Activated T-helper 2 cell treated with anti-CD3 and anti-CD28 coated beads, Interferon-gamma antibody, Interleukin-2, Interleukin-4, amounts not matched to agents 10 μg/mL and 5 μg/mL and 100 μg/mL, durations not matched to agents 14 hours and 24 hours and 36 hours (primary cell): ENCODE measurements at regions of chr5 and their contacts with region 1.

Region 1: DNA sequence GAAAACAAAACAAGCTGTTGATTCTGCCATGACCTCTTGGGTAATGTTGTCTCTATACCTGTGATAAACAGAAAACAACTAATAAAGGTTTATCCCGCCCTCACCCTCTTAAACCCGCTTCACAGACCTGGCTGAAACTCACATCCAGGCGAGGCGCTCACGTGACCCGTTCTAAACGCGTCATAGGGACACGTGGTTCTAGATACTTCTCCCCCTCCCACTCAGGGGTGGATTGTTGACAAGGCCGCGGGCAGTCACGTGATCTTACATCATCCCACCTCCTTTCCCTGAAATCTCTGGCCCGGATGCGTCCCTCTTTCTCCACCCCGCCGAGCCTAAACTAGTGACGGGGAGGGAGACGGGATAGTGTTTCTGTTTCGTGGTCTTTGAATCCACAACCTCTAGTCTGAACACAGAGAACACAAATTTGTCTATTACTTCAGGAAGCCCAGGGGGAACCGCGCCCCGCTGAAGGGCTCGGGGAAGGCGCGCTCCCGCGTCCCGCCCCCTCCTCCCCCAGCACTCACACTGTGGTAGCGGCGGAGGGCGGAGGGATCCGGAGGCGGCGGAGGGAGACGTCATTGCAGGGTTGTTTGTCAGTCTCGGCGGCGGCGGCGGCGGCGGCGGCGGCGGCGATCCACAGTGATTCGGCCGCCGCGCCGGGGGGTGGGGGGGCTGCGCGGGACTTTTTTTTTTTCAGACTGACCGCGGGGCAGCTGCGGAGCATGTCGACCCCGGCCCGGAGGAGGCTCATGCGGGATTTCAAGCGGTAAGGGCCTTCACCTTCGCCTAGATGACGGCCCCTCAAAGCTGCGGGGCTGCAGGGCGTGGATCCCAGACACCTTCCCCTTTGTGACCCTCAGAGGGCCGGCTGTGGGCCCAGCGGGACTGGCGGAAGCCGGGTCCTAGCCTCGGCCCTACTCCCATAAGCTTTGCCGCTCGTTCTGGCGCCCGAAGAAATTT is at the start of gene UBE2B:
- DNase-seq: peak; percentile 94
- H3K4me3 Mint-ChIP-seq: peak within 1 kb of the TSS; percentile 95
- H3K27ac Mint-ChIP-seq: peak within 1 kb of the TSS; percentile 96
- H3K4me1 Mint-ChIP-seq: peaks cover 44% of the 10 kb centered on the region
- H3K27me3 Mint-ChIP-seq: no peaks in the 10 kb centered on the region
- total RNA-seq, gene UBE2B: 97.2 and 97.5 TPM in 2 replicates

Region 2: DNA sequence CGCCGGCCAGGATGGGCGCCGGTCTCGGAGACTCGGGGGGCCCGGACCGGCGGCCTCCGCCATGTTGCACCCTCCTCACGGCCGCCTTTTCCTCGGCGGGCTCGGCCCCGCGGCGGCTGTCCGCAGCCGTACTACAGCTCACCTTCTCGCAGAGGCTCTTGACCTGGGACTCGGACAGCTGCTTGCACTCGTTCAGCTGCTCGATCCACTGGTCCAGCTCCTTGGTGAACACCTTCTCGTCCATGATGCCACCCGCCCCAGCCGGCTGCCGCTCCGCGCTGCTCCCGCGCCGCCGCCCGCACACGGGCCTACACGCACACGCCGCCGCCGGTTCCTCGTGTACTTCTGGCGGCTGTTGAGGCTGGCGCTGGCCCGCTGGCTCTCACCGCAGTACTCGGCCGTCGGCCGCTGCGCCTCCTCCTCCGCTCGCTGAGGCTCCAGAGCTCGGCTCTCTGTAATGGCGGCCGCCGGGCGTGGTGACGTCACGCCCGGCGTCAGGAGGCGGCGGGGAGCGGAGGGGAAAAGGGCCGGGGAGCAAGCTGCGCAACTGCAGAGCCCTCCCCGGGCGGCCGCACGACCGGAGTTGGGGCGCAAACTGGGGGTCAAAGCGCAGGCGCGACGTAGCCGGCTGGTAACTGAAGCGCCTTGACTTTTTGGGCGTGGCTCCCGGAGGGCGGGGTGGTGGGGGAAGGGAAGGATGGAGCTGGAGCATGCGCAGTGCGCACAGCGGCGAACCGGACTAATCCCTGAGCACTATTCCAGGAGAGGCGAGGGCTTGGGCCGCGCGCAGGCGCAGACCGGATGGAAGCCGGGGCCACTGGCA is 145.3 kb before region 1 on chr5 and contains the start of gene PPP2CA:
- intact Hi-C with region 1: loop called (anchors 2 kb)
- DNase-seq: peak; percentile 100
- H3K4me3 Mint-ChIP-seq: peak within 1 kb of the TSS; percentile 89
- H3K27ac Mint-ChIP-seq: peak within 1 kb of the TSS; percentile 98
- H3K4me1 Mint-ChIP-seq: peaks cover 38% of the 10 kb centered on the region
- H3K27me3 Mint-ChIP-seq: no peaks in the 10 kb centered on the region
- total RNA-seq, gene PPP2CA: 171 and 179 TPM in 2 replicates

Region 3: DNA sequence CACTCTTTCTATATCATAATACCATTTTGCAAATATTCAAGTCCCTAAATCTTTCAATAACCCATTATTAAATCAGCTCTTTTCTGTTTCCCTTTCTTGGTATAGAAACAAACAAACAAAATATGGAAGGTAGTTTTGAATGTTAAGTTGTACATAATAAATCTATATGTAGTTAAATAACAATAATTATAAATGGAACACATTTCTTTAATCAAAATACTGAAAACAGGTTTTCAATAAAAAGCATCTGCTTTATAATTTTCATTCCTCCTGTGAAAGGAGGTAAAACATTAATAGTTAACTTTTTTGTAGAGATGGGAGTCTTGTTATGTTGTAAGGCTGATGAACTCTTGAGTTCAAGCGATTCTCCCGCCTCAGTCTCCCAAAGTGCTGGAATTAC is 58.4 kb before region 1 on chr5:
- intact Hi-C with region 1: no loop called
- DNase-seq: no peak
- H3K4me3 Mint-ChIP-seq: no peak overlapping the region
- H3K27ac Mint-ChIP-seq: no peak overlapping the region
- H3K4me1 Mint-ChIP-seq: peaks cover 3% of the 10 kb centered on the region
- H3K27me3 Mint-ChIP-seq: peaks cover 2% of the 10 kb centered on the region

Region 4: DNA sequence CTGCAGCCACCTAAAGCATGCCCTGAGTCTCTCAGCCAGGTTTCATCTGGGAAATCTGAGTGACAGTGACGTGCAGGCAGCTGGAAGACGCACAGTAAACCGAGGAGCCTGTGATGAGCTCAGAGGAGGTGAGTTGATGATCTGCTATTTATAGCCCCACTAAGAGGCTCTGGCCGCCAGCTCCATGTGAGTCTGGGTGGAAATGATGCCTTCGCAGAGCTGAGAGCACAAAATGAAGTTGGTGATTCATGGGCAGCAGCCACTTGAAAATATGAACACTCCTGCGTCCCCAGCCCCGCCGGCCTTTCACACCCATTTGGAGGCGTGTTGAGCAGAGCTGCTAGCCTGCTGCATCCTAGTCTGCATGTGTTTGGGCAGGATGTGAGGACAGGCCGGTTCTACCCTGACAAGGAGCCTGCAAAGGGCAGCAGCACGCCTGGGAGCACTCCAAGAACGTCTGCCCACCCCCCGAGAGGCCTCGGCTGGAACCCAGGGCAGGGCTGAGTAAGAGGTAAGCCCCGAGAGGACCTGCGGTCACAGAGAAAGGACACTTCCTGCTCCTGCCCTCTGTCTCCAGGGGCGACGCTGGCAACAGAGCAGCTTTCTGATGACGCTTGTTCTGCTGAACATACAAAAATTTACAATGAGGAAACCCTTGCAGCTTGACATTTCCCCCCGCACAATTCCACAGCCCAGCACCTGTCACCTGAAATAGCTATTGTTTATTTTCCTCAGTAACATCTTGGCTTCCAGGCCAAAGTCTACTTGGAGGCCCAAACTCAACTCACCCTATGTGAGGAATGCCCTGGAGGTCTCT is 65.6 kb after region 1 on chr5:
- intact Hi-C with region 1: loop called (anchors 2 kb)
- DNase-seq: peak; percentile 62
- H3K4me3 Mint-ChIP-seq: no peak overlapping the region
- H3K27ac Mint-ChIP-seq: peak overlapping the region; percentile 68
- H3K4me1 Mint-ChIP-seq: peaks cover 19% of the 10 kb centered on the region
- H3K27me3 Mint-ChIP-seq: no peaks in the 10 kb centered on the region

Region 5: GRCh38 chr5:134586866-134587524 is 215.8 kb after region 1 on chr5:
- intact Hi-C with region 1: loop called (anchors 5 kb)
- DNase-seq: peak; percentile 74
- H3K4me3 Mint-ChIP-seq: no peak overlapping the region
- H3K27ac Mint-ChIP-seq: peak overlapping the region; percentile 25
- H3K4me1 Mint-ChIP-seq: peaks cover 15% of the 10 kb centered on the region
- H3K27me3 Mint-ChIP-seq: no peaks in the 10 kb centered on the region

Region 6: GRCh38 chr5:134626369-134627014 is 255.3 kb after region 1 on chr5:
- intact Hi-C with region 1: no loop called
- DNase-seq: no peak
- H3K4me3 Mint-ChIP-seq: no peak overlapping the region
- H3K27ac Mint-ChIP-seq: no peak overlapping the region
- H3K4me1 Mint-ChIP-seq: peaks cover 21% of the 10 kb centered on the region
- H3K27me3 Mint-ChIP-seq: no peaks in the 10 kb centered on the region

Region 7: GRCh38 chr5:134738133-134738962 is 367.2 kb after region 1 on chr5 and contains the start of gene CAMLG:
- intact Hi-C with region 1: loop called (anchors 5 kb)
- DNase-seq: peak; percentile 97
- H3K4me3 Mint-ChIP-seq: peak within 1 kb of the TSS; percentile 91
- H3K27ac Mint-ChIP-seq: peak within 1 kb of the TSS; percentile 87
- H3K4me1 Mint-ChIP-seq: peaks cover 16% of the 10 kb centered on the region
- H3K27me3 Mint-ChIP-seq: no peaks in the 10 kb centered on the region
- total RNA-seq, gene CAMLG: 28.1 and 29.1 TPM in 2 replicates